ENCODE measurements at regions of chr6 and their contacts with region 1.

Region 1: DNA sequence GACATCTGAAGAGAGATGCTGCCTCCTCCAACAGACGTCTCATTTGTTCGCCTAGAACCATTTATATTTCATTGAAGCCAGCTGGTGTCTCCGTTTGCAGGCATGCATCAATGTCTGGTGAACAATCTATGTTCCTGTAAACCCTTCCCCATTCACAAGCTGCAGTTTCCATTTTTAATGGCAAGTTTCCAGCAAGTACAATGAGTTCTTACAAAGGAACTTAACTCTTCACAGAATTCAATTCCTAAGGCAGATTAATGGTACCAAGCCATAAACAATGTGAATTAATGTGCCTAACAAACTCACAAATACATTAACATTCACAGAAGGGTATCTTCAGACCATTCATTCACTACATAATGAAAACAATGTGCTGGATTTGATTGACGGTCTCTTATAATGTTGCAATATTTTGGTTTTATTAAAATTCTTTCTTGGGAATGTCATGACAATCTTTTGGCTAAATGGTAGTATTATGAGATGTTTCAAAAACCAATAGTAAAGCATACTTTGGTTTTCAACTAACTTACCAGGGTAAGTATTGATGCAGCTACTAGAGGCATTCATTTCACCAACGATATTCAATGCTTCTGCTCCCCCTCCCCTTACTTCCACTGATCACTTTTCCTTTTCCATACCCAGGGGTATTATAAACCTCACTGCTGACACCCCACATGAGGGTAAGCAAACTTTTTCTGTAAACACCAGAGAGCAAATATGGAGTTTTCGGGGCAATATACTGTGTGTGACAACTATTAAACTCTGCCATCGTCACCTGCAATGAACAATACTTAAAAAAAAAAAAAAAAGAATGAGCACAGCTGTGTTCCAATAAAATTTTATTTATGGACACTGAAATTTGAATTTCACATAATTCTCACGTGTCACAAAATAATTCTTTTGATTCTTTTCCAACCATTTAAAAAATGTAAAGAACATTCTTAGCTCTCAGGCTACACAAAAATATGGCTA is 4.2 kb downstream of the AKIRIN2 start:
- DNase-seq: no peak
- CTCF ChIP-seq: no peak

Region 2: DNA sequence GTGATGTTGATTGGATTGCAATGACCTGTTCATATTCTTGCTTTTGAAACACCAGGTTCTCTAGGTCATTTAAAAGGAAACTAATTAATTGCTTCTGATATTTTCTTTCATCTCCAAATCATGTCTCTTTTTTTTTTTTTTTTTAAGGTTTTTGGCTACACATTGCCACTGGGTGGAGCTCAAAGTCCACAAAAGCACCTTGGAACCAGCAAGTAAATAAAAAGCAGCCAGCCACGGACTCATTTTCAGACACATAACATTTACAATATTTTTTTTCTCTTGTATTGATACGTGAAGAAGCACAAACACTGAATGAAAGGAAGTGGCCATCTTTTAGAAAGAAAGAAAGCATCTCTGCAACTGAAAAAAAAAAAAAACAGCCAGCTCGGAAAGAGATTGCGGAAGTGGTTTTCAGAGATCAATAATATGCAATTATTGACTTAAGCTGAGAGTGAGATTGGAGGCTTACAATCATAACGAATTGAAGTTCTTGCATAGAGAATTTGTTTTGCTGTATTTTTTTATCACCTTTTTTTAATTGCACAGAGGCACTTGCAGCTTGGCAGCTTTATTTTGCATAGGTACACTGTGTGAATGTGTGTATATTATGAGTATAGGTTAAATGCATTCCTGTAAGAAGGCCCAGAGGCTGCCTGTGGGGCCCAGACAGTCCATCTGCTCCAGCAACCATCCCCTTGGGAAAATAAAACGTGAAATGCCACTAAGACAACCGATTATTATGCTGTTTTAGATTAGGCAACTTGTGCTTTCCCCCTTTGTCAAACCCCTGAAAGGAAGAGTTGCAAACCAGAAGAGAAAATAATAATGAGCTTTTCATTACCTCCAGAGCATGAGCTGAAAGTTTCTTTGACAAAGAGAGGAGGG is 631.2 kb before region 1 on chr6:
- in situ Hi-C with region 1: no loop called
- DNase-seq: peak; percentile 62
- CTCF ChIP-seq: peak; percentile 54

Region 3: DNA sequence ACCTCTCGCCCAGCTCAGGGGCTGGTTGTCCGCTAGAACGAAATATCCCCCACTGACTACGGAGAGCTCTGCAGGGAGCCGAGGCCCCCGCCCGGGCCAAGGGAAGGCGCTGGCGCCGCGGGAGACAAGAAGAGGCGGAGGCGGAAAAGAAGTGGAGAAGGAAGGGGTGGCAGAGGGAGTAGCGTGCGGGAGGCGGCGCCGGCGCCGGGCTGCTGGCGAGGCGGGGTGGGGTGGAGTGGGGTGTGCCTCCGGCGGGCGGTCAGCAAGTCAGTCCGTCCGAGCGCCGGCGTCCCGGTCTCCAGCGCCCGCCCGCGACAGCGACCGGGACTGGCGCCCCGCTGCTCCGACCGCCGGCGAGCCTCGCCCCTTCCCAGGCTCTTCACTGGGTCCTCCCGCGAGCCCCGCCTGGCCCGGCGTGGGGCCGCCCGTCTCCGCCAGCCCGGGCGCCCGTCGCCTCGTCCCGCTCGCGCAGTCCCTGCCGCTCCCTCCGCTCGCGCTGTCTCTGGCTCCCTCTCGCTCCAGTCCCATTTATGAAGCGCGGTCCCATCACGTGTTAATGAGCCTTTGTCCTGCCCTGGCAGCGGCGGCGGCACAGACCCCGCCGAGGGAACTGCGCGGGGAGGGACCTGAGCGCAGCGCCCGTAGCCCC is 468.1 kb after region 1 on chr6 and contains the start of gene CNR1:
- in situ Hi-C with region 1: loop called (anchors 10 kb)
- DNase-seq: peak; percentile 74
- CTCF ChIP-seq: peak; percentile 60